Naive thymus-derived CD4-positive, alpha-beta T cell (primary cell): ENCODE measurements at regions of chr20 and their contacts with region 1.

Region 1: GRCh38 chr20:9807136-9807535 is 31.7 kb downstream of the PAK5 start:
- DNase-seq: no peak
- ATAC-seq: no peak
- H3K4me3 ChIP-seq: no peak overlapping the region
- H3K4me3 Mint-ChIP-seq: no peak overlapping the region
- H3K27ac ChIP-seq: no peak overlapping the region
- H3K27ac Mint-ChIP-seq: no peak overlapping the region
- H3K4me1 ChIP-seq: no peaks in the 10 kb centered on the region
- H3K4me1 Mint-ChIP-seq: no peaks in the 10 kb centered on the region
- H3K27me3 ChIP-seq: no peaks in the 10 kb centered on the region
- H3K27me3 Mint-ChIP-seq: peaks cover 0 to 7% (median 0%) of the 10 kb centered on the region in 5 donors

Region 2: DNA sequence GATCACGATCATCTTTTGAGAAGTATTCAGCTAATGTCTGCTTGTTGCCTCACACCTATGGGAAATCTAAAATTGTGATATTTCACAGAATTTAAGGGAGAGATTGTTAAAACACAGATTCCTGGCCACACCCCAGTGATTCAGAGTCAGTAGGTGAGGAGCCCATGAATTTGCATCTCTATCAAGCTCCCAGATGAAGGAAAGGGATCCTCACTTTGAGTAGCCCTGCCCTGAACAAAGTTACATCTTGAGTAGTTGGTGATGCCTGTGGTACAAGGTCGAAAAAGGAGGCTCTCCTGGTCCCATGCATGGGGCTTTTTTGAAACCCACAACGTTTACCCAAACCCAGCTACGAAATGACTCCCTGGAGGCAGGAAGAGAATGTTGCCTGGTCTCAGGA is 47.7 kb before region 1 on chr20:
- CTCF ChIA-PET with region 1: no interaction called
- POLR2A ChIA-PET with region 1: no interaction called
- intact Hi-C with region 1: loop called in 1 of 2 experiments (anchors 2 kb)
- DNase-seq: no peak
- ATAC-seq: no peak
- H3K4me3 ChIP-seq: no peak overlapping the region
- H3K4me3 Mint-ChIP-seq: no peak overlapping the region
- H3K27ac ChIP-seq: no peak overlapping the region
- H3K27ac Mint-ChIP-seq: no peak overlapping the region
- H3K4me1 ChIP-seq: no peaks in the 10 kb centered on the region
- H3K4me1 Mint-ChIP-seq: no peaks in the 10 kb centered on the region
- H3K27me3 ChIP-seq: no peaks in the 10 kb centered on the region
- H3K27me3 Mint-ChIP-seq: no peaks in the 10 kb centered on the region